ENCODE measurements at regions of chr6 and their contacts with region 1.

Region 1: DNA sequence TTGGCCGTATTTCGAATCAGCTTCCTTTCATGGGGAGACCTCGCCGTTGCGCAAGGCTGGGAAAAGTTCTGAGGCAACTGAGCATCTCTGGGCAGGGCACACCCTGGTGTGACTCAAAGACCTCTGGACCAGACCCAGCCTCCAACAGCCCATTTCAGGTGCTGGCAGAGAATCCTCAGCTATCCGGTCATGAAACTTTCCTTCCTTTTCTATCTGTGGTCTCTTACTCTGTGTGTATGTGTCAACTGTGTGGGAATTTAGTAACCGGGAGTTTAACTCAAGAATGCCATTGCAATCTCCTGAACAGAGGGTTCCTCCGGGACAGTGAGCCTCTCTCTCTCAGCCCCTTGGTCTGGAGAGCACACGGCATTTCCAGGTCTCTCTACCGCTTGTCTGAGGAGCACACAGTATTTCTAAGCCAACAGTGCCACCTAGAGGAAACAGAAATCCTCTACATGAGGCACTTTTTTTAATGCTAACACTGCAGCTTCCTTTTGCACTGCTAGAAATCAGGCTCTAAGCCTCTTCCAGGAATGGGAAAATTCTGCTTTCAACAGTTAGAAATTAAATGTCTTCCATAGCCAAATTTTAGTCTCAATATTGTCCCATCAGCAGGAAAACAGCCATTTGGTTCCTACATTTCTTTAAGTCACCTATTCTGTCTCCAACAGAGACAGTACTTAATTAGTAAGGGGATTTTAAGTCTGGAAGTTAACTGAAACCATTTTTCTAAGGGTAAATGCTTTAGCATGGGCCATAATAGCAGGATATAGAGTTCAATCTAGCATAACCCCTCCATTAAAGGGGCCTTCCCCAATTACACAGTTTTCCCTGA is 32.7 kb downstream of the PLN start:
- DNase-seq: peak in 1 of 2 experiments; percentile 15
- H3K4me3 ChIP-seq: no peak overlapping the region
- H3K27ac ChIP-seq: no peak overlapping the region; the same call in 1 of the 2 replicates
- H3K4me1 ChIP-seq: peaks cover 0 to 10% (median 0%) of the 10 kb centered on the region in 4 experiments; a peak in 2 of 7 replicates
- H3K27me3 ChIP-seq: no peaks in the 10 kb centered on the region
- CTCF ChIP-seq: peak in 2 of 3 experiments; percentile 82 to 85; a peak in 3 of 4 replicates
- EP300 ChIP-seq: no peak
- POLR2A ChIP-seq: no peak
- RAD21 ChIP-seq: peak; percentile 95 to 96

Region 2: GRCh38 chr6:118249680-118250079 is 331.1 kb before region 1 on chr6:
- CTCF ChIA-PET with region 1: no interaction called
- POLR2A ChIA-PET with region 1: no interaction called
- DNase-seq: no peak
- H3K4me3 ChIP-seq: no peak overlapping the region
- H3K27ac ChIP-seq: no peak overlapping the region
- H3K4me1 ChIP-seq: no peaks in the 10 kb centered on the region
- H3K27me3 ChIP-seq: no peaks in the 10 kb centered on the region
- CTCF ChIP-seq: no peak
- EP300 ChIP-seq: no peak
- POLR2A ChIP-seq: no peak
- RAD21 ChIP-seq: no peak

Region 3: GRCh38 chr6:118559659-118560058 is 21.1 kb before region 1 on chr6:
- CTCF ChIA-PET with region 1: interaction called, 48 read pairs
- POLR2A ChIA-PET with region 1: interaction called, 4 read pairs
- DNase-seq: no peak
- H3K4me3 ChIP-seq: no peak overlapping the region
- H3K27ac ChIP-seq: no peak overlapping the region
- H3K4me1 ChIP-seq: no peaks in the 10 kb centered on the region; a peak in 1 of 7 replicates
- H3K27me3 ChIP-seq: no peaks in the 10 kb centered on the region
- CTCF ChIP-seq: no peak
- EP300 ChIP-seq: no peak
- POLR2A ChIP-seq: no peak
- RAD21 ChIP-seq: no peak

Region 4: DNA sequence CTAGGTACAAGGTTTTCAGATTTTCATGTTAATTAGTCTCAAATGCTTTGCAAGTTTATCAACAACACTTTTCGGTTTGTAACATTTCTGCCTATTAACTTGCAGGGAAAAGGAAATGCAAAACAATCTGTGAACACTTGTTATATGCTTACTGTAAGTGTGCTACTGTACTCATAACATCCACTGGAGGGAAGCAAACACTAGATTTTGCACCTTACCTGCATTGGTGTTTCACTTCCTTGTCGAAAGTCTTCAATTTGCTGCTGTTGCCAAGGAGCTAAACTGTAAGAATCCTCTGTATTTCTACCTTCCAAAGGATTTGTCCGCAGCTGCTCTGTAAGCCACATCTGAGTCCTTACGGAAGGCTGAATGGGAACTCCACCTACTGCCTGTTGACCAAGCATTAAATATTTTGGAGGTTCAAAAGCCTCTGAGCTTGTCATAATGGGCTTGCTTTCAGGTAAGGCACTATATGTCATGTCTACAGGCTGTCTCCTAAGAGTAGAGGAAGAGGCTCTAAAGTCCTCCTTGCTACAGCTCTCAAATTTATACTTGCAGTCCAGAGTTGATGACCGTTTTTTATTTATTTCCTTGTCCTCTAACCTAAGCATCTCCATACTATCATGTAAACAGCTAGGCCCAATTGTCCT is 15.4 kb before region 1 on chr6:
- CTCF ChIA-PET with region 1: interaction called, 48 read pairs
- POLR2A ChIA-PET with region 1: interaction called, 7 read pairs
- DNase-seq: no peak
- H3K4me3 ChIP-seq: no peak overlapping the region
- H3K27ac ChIP-seq: no peak overlapping the region
- H3K4me1 ChIP-seq: peaks cover 0 to 7% (median 4%) of the 10 kb centered on the region in 4 experiments; a peak in 5 of 7 replicates
- H3K27me3 ChIP-seq: peaks cover 0 to 1% (median 0%) of the 10 kb centered on the region in 4 experiments; a peak in 1 of 7 replicates
- CTCF ChIP-seq: peak in 2 of 3 experiments; percentile 58 to 70; a peak in 3 of 4 replicates
- EP300 ChIP-seq: no peak
- POLR2A ChIP-seq: no peak
- RAD21 ChIP-seq: peak; percentile 81 to 83

Region 5: GRCh38 chr6:118617417-118617816 is 36.6 kb after region 1 on chr6:
- CTCF ChIA-PET with region 1: interaction called, 11 read pairs
- POLR2A ChIA-PET with region 1: no interaction called
- DNase-seq: no peak
- H3K4me3 ChIP-seq: no peak overlapping the region
- H3K27ac ChIP-seq: no peak overlapping the region
- H3K4me1 ChIP-seq: no peaks in the 10 kb centered on the region
- H3K27me3 ChIP-seq: no peaks in the 10 kb centered on the region
- CTCF ChIP-seq: no peak
- EP300 ChIP-seq: no peak
- POLR2A ChIP-seq: no peak
- RAD21 ChIP-seq: no peak

Region 6: GRCh38 chr6:118679327-118679901 is 98.6 kb after region 1 on chr6:
- CTCF ChIA-PET with region 1: no interaction called
- POLR2A ChIA-PET with region 1: no interaction called
- DNase-seq: no peak
- H3K4me3 ChIP-seq: no peak overlapping the region
- H3K27ac ChIP-seq: no peak overlapping the region
- H3K4me1 ChIP-seq: no peaks in the 10 kb centered on the region
- H3K27me3 ChIP-seq: no peaks in the 10 kb centered on the region
- CTCF ChIP-seq: no peak
- EP300 ChIP-seq: no peak
- POLR2A ChIP-seq: no peak
- RAD21 ChIP-seq: no peak